WTC11 (cell line): ENCODE measurements at regions of chr2 and their contacts with region 1.

Region 1: GRCh38 chr2:231104115-231104713 is 20.6 kb downstream of the HTR2B start:
- DNase-seq: peak; percentile 59
- ATAC-seq: peak; percentile 88
- H3K4me3 Mint-ChIP-seq: no peak overlapping the region
- H3K27ac Mint-ChIP-seq: no peak overlapping the region
- H3K4me1 Mint-ChIP-seq: no peaks in the 10 kb centered on the region
- H3K27me3 Mint-ChIP-seq: no peaks in the 10 kb centered on the region
- CTCF ChIP-seq: peak; percentile 39; the same call in 1 of the 2 replicates

Region 2: GRCh38 chr2:230619466-230619865 is 484.7 kb before region 1 on chr2:
- CTCF ChIA-PET with region 1: no interaction called
- POLR2A ChIA-PET with region 1: no interaction called
- DNase-seq: no peak
- ATAC-seq: no peak
- H3K4me3 Mint-ChIP-seq: no peak overlapping the region
- H3K27ac Mint-ChIP-seq: no peak overlapping the region
- H3K4me1 Mint-ChIP-seq: 0 out of 2 replicates have a peak, but pooled peaks cover 3% of the 10 kb centered on the region
- H3K27me3 Mint-ChIP-seq: no peaks in the 10 kb centered on the region
- CTCF ChIP-seq: no peak

Region 3: DNA sequence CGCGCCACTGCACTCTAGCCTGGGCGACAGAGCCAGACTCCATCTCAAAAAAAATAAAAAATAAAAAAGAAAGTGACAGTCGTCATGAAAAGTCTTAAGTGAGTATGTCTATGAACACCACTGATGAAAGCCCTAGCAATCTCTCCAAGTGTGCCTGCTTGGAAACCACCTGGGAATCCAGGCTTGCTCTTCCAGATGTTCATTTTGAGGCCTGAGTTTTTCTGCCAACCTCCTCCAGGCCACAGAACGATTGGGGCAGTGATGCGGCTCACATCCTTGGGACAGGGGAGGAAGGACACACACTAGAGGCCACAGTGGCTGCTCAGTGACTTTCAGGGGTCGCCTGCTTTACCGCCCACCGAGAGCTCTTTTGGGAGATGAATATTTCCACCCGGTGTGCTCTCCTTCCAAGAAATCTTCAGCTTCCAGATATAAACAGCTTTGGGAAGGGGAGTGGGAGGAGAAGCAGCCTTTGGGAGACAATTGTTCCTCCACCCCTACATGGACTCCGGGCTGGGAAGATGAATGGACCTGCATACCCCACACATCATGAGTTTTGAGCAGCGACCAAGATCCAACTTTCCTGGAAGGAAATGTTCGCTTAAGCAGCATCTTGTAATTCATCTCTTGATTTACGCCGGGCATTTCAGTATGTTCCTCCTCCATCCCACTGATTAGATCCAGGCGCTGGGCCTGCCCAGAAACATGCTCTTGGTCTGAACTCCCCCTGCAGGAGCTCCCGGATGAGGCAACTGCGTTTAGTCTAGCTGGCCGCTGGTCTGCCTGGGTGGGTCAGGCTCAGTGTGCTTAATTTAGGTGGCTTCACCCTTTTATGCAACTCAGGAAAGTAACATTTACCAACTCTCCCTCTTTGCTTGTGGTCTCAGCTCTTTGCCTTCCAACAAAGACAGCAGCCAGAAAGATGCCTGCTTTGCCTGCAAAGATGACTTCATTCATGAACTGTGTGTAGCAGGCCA is 88.0 kb after region 1 on chr2:
- CTCF ChIA-PET with region 1: interaction called, 22 read pairs
- POLR2A ChIA-PET with region 1: interaction called, 3 read pairs
- DNase-seq: peak; percentile 80
- ATAC-seq: peak; percentile 82
- H3K4me3 Mint-ChIP-seq: no peak overlapping the region
- H3K27ac Mint-ChIP-seq: no peak overlapping the region; the same call in 1 of the 2 replicates
- H3K4me1 Mint-ChIP-seq: peaks cover 33% of the 10 kb centered on the region
- H3K27me3 Mint-ChIP-seq: no peaks in the 10 kb centered on the region; the same call in 1 of the 2 replicates
- CTCF ChIP-seq: peak; percentile 39; the same call in 1 of the 2 replicates